Activated CD4-positive, alpha-beta memory T cell treated with anti-CD3 and anti-CD28 coated beads for 36 hours (primary cell): ENCODE measurements at regions of chr4 and their contacts with region 1.

Region 1: DNA sequence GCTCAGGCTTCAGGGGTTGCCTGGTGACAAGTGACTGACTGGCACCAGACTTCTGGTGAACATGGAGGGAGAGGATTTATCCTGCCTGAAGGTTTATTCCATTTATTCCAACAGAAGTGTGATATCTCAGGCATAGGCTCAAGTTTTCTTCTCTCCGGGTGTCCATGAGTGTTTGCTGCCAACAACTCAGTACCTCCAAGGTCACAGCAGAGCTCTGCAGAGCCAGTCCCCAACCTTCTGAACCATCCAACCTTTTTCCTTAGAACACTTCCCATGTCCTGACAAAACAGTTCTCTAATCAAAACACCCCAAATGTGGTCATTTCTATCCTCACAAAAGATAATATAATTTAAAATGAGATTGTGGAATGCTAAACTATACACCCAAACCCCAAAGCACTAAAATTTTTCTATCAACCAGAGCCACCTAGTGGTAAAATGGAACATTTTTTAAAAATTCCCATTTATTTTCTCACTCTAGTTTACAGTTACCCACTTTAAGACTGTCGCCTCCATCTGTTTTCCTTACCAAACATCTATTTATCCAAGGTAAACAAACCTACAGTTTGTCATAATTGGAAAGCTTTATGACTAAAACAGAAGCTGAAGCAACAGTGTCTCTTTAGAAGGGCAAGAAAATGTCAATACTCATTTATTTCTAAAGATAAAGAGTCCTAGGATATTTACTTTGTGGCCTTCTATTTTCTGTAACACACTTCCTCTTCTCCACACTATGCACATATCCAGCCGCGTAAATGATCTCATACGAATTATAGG is 39.6 kb downstream of the TMEM154 start:
- DNase-seq: no peak
- H3K4me3 Mint-ChIP-seq: no peak overlapping the region
- H3K27ac Mint-ChIP-seq: no peak overlapping the region
- H3K4me1 Mint-ChIP-seq: peaks cover 42% of the 10 kb centered on the region
- H3K27me3 Mint-ChIP-seq: no peaks in the 10 kb centered on the region

Region 2: DNA sequence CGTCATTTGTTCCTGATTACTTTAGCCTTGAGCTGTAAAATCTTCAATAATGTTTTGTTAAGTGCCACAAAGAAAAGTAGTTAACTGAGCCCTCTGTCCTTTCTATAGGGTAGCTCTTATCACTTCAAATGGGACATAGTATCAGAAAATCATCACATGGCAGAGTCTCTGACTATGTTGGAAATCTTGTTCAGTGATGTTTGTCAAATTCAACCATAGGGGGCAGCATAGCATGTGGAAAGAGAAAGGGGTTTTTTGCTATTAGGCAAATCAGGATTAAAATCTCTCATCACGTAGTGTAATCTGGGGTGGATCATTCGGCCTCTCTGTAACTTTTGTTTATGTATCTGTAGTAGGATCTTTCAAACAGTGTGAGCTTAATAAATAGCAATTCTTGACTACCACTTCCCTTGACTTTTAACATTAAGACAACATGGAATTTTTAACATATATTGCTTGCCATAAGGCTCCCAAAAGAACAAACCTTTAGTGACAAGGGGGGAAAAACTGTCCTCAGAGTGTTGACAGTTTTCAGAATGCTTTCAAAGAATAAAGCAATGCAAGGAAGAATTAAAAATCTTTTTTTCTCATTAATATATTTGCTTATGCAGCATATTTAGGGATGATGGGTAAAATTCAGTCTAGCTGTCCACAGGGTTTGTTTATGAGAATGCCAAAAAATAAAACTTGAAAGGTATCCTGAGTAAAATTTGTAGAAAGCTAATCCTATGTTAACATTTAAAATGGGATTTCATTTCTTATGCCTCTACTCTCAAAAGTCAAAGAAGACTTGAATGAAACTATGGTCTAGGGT is 231.5 kb before region 1 on chr4:
- CTCF ChIA-PET with region 1: interaction called, 41 read pairs
- POLR2A ChIA-PET with region 1: no interaction called
- intact Hi-C with region 1: loop called (anchors 1 kb)
- DNase-seq: no peak
- H3K4me3 Mint-ChIP-seq: no peak overlapping the region
- H3K27ac Mint-ChIP-seq: no peak overlapping the region
- H3K4me1 Mint-ChIP-seq: peaks cover 12% of the 10 kb centered on the region
- H3K27me3 Mint-ChIP-seq: no peaks in the 10 kb centered on the region

Region 3: GRCh38 chr4:152454398-152455011 is 185.7 kb before region 1 on chr4:
- CTCF ChIA-PET with region 1: interaction called, 20 read pairs
- POLR2A ChIA-PET with region 1: no interaction called
- intact Hi-C with region 1: loop called (anchors 2 kb)
- DNase-seq: no peak
- H3K4me3 Mint-ChIP-seq: no peak overlapping the region
- H3K27ac Mint-ChIP-seq: no peak overlapping the region
- H3K4me1 Mint-ChIP-seq: peaks cover 33% of the 10 kb centered on the region
- H3K27me3 Mint-ChIP-seq: no peaks in the 10 kb centered on the region

Region 4: DNA sequence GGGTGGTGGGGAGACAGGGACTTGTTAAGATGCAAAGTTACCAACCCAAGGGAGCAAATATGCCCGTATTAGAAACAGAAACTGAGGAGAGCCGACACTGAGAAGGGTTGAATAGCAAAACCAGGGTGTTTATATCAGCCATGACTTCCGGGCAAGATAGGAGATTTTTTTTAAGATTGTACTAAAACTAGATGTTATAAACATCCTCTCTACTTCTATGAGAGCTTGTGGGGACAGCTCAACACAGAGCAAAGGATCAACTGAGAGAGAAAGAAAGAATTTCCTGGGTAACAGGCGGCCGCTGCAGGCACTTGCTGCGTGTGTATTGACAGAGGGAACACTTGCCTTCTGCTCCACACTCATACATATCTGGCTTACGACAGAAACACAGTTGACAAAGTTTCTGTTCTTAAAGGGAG is 55.2 kb before region 1 on chr4:
- CTCF ChIA-PET with region 1: no interaction called
- POLR2A ChIA-PET with region 1: no interaction called
- intact Hi-C with region 1: no loop called
- DNase-seq: peak; percentile 17
- H3K4me3 Mint-ChIP-seq: peak overlapping the region; percentile 69
- H3K27ac Mint-ChIP-seq: peak overlapping the region; percentile 86
- H3K4me1 Mint-ChIP-seq: peaks cover 23% of the 10 kb centered on the region
- H3K27me3 Mint-ChIP-seq: no peaks in the 10 kb centered on the region

Region 5: DNA sequence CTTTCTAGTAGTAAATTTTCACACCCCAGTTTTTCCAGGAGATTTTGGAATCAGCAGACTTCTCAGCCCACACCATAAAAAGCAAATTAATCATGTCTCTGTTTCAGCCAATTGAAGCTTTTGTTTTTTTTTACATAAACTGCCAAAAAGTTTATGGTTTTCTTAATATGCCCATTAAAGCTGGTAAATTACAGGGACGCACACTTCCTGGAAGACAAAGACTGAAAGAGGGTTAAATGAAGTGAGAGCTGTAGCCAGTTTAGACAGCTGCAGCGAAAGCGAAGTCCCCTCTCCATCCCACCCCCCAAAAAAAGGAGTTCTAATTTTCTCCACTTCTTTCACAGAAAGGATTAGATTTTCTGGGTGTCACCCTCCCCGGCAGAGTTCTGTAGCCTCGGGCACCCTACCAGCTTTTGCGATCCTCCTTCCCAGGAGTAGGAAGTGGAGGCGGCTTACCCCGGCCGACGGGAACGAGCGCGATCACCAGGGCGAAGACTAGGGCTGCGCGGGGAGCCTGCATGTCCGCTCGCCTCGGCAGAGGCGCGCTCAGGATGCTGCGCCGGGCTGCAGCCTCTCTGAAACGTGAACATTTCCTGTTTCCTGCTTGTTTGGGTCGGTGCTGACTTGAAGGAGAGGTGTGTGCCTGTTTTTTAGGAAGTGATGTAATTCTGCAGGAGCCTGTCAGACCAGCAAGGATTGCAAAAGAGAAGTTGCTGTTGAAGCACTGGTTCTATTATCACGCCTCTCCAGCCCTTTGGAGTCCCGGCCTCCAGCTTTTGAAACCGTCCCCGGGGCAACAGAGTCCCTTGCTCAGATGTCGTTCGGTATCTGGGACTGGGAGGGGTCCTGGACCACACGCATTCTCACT is 39.4 kb after region 1 on chr4 and contains the start of gene TMEM154:
- CTCF ChIA-PET with region 1: interaction called, 4 read pairs
- POLR2A ChIA-PET with region 1: interaction called, 3 read pairs
- intact Hi-C with region 1: loop called (anchors 2 kb)
- DNase-seq: peak; percentile 82
- H3K4me3 Mint-ChIP-seq: peak within 1 kb of the TSS; percentile 91
- H3K27ac Mint-ChIP-seq: peak within 1 kb of the TSS; percentile 84
- H3K4me1 Mint-ChIP-seq: peaks cover 58% of the 10 kb centered on the region
- H3K27me3 Mint-ChIP-seq: no peaks in the 10 kb centered on the region
- total RNA-seq, gene TMEM154: 18.1 to 20.8 TPM

Region 6: GRCh38 chr4:152735396-152735859 is 95.2 kb after region 1 on chr4:
- CTCF ChIA-PET with region 1: interaction called, 6 read pairs
- POLR2A ChIA-PET with region 1: no interaction called
- intact Hi-C with region 1: loop called (anchors 5 kb)
- DNase-seq: no peak
- H3K4me3 Mint-ChIP-seq: no peak overlapping the region
- H3K27ac Mint-ChIP-seq: no peak overlapping the region
- H3K4me1 Mint-ChIP-seq: peaks cover 3% of the 10 kb centered on the region
- H3K27me3 Mint-ChIP-seq: peaks cover 3% of the 10 kb centered on the region